MCF 10A (cell line): ENCODE measurements at regions of chr9 and their contacts with region 1.

Region 1: GRCh38 chr9:92342825-92343488 is 17.2 kb downstream of the CENPP start:
- DNase-seq: no peak
- H3K4me3 Mint-ChIP-seq: no peak overlapping the region
- H3K27ac Mint-ChIP-seq: peak overlapping the region; percentile 48
- H3K4me1 Mint-ChIP-seq: no peaks in the 10 kb centered on the region
- H3K27me3 Mint-ChIP-seq: no peaks in the 10 kb centered on the region
- CTCF ChIP-seq: peak; percentile 32

Region 2: GRCh38 chr9:92525306-92525705 is 182.3 kb after region 1 on chr9:
- CTCF ChIA-PET with region 1: no interaction called
- POLR2A ChIA-PET with region 1: no interaction called
- intact Hi-C with region 1: no loop called
- DNase-seq: no peak
- H3K4me3 Mint-ChIP-seq: no peak overlapping the region
- H3K27ac Mint-ChIP-seq: no peak overlapping the region
- H3K4me1 Mint-ChIP-seq: no peaks in the 10 kb centered on the region
- H3K27me3 Mint-ChIP-seq: no peaks in the 10 kb centered on the region
- CTCF ChIP-seq: no peak

Region 3: DNA sequence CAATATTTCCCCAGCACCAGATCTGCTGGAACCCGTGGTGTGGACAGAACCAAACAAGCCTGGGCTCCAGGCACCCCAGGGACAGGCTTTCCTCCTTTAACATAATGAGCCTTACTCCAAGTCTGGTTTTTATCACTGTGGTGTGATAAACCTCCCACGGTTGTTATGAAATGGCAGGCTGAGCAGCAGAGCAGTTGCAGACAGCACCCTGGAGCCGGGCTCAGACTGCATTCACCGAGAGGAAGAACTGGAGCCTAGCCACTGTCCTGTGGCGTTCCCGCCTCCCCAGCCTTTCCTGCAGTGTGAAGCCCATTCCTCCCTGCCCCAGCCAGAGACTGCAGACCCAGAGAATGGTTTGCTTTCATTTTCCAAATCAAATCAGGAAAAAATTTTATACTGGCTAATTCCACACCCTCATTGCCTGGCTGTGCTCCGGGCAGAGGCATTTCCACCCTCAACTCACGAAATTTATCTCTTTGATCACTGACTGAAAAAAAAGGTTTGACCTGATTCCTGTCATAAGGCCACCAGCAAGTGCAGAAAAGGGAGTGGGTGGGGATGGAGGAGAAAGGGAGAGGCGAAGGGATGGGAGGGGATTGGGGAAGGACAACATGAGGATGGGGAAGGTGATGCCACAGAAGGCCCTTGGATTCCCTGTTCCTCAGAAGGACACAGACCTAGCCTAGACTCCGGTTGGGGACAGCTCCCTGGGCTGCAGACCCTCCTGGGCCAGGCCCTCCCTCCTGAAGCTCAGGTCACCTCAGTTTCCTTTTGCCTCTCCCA is 308.1 kb after region 1 on chr9:
- CTCF ChIA-PET with region 1: interaction called, 10 read pairs
- POLR2A ChIA-PET with region 1: no interaction called
- intact Hi-C with region 1: no loop called
- DNase-seq: no peak
- H3K4me3 Mint-ChIP-seq: no peak overlapping the region
- H3K27ac Mint-ChIP-seq: peak overlapping the region; percentile 78
- H3K4me1 Mint-ChIP-seq: peaks cover 28% of the 10 kb centered on the region
- H3K27me3 Mint-ChIP-seq: no peaks in the 10 kb centered on the region
- CTCF ChIP-seq: no peak